Caco-2 (cell line): ENCODE measurements at regions of chr12 and their contacts with region 1.

Region 1: DNA sequence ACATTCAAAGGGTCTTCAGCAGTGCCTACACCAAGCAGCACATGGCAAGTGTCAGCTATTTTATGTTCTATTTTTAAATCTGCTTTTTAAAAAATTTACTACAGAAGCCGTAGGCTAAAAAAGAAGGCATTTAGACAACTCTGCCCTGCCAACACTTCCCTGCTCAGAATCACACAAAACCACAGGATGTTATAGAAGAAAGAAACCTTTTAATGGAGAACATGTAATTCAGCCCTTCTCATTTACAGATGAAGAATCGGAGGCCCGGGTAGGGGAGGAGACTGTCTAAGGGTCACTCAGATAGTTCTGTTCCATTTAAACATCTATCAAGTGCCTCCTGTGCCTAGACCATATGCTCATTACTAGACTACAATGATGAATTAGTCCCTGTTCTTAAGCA is 171.8 kb upstream of the NTF3 start:
- DNase-seq: no peak
- H3K4me3 ChIP-seq: no peak overlapping the region
- H3K4me3 Mint-ChIP-seq: no peak overlapping the region
- H3K27ac Mint-ChIP-seq: no peak overlapping the region
- H3K4me1 ChIP-seq: peaks cover 22% of the 10 kb centered on the region
- H3K4me1 Mint-ChIP-seq: no peaks in the 10 kb centered on the region
- H3K27me3 ChIP-seq: no peaks in the 10 kb centered on the region
- H3K27me3 Mint-ChIP-seq: no peaks in the 10 kb centered on the region
- CTCF ChIP-seq: no peak

Region 2: DNA sequence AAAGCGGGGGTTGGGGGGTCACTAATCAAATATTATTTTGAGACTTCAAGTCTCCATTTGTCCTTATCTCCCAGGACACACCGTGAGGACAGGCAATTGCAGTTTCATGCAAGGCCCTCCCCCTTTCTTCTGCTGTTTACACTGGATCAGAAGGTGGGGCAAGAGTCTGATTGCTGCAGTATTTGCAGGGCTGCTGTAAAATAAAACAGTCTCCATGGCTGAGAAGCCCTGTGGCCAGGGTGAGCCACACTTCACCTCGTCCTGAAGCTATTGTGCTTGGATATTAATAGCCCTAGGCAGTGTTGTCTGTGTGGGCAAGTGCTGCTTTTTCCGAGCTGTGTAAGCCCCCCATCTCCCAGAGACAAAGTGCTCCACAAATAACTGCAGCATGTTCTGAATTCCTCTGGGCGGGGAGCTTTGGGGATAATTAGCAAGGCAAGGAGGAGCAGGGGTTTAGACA is 15.5 kb before region 1 on chr12:
- CTCF ChIA-PET with region 1: interaction called, 3 read pairs
- POLR2A ChIA-PET with region 1: interaction called, 5 read pairs
- intact Hi-C with region 1: loop called (anchors 1 kb)
- DNase-seq: peak; percentile 87 to 89
- H3K4me3 ChIP-seq: no peak overlapping the region
- H3K4me3 Mint-ChIP-seq: peak overlapping the region; percentile 48
- H3K27ac Mint-ChIP-seq: peak overlapping the region; percentile 81
- H3K4me1 ChIP-seq: peaks cover 49% of the 10 kb centered on the region
- H3K4me1 Mint-ChIP-seq: peaks cover 38% of the 10 kb centered on the region
- H3K27me3 ChIP-seq: no peaks in the 10 kb centered on the region
- H3K27me3 Mint-ChIP-seq: no peaks in the 10 kb centered on the region
- CTCF ChIP-seq: no peak

Region 3: GRCh38 chr12:5309654-5310053 is 49.6 kb after region 1 on chr12:
- CTCF ChIA-PET with region 1: no interaction called
- POLR2A ChIA-PET with region 1: no interaction called
- intact Hi-C with region 1: loop called (anchors 2 kb)
- DNase-seq: no peak
- H3K4me3 ChIP-seq: no peak overlapping the region
- H3K4me3 Mint-ChIP-seq: no peak overlapping the region
- H3K27ac Mint-ChIP-seq: no peak overlapping the region
- H3K4me1 ChIP-seq: peaks cover 22% of the 10 kb centered on the region
- H3K4me1 Mint-ChIP-seq: peaks cover 18% of the 10 kb centered on the region
- H3K27me3 ChIP-seq: no peaks in the 10 kb centered on the region
- H3K27me3 Mint-ChIP-seq: no peaks in the 10 kb centered on the region
- CTCF ChIP-seq: no peak